ENCODE measurements at regions of chr11 and their contacts with region 1.

Region 1: GRCh38 chr11:65274735-65275682 is 13.2 kb downstream of the POLA2 start:
- DNase-seq: peak; percentile 77 to 91
- H3K4me3 ChIP-seq: no peak overlapping the region
- CTCF ChIP-seq: peak in 1 of 3 donors; percentile 75
- POLR2A ChIP-seq: no peak

Region 2: GRCh38 chr11:65314501-65315203 is 39.6 kb after region 1 on chr11 and contains the start of gene CDC42EP2:
- intact Hi-C with region 1: loop called (anchors 5 kb)
- DNase-seq: peak; percentile 68 to 96
- H3K4me3 ChIP-seq: peak within 1 kb of the TSS; percentile 49
- CTCF ChIP-seq: no peak
- POLR2A ChIP-seq: no peak
- total RNA-seq, gene CDC42EP2: 2.5 to 4.2 (median 3.4) TPM in 3 of 4 donors, not detected in the other

Region 3: DNA sequence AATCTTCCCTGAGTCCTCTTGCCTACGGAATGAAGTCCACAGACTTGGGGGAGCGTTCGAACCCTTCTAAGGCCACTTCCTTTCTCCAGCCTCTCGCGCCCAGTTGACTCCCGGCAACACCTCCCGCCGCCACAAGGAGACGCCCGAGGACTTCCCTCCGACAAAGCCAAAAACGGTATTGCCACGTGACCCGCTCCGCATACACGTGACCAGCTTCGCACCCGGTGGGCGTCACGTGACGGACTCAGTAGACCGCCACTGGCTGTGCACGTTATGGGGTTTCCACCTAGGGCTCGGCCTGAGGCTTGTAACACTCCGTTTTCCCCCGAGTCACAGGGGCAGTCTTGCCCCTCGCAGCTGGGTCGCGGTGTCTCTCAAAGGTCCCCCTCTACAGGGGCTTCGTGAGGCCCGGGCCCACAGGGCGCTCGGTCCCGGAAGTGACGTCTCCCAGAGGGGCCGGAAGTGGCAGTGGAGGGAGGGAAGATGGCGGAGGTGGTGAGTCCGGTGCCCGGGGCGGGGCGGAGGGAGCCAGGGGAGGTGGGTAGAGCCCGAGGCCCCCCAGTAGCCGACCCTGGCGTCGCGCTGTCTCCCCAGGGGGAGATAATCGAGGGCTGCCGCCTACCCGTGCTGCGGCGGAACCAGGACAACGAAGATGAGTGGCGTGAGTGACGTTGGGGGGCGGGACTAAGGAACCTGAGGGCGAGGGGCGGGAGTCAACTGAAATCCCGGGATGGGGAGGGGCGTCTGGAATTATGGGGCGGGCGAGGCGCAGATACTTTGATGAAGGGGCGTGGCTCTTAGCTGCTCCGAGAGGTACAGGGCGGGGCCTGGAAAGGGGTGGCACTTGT is 437.0 kb after region 1 on chr11 and contains the start of gene KAT5:
- intact Hi-C with region 1: no loop called
- DNase-seq: peak; percentile 99 to 100
- H3K4me3 ChIP-seq: peak within 1 kb of the TSS; percentile 52
- CTCF ChIP-seq: peak in 2 of 3 donors; percentile 95 to 100
- POLR2A ChIP-seq: peak in 1 of 2 donors; percentile 74
- total RNA-seq, gene KAT5: 68.9 to 96.0 (median 85.7) TPM

Measured in lower leg skin (tissue), 4 donors.